T-cell (primary cell): ENCODE measurements at regions of chr16 and their contacts with region 1.

Region 1: DNA sequence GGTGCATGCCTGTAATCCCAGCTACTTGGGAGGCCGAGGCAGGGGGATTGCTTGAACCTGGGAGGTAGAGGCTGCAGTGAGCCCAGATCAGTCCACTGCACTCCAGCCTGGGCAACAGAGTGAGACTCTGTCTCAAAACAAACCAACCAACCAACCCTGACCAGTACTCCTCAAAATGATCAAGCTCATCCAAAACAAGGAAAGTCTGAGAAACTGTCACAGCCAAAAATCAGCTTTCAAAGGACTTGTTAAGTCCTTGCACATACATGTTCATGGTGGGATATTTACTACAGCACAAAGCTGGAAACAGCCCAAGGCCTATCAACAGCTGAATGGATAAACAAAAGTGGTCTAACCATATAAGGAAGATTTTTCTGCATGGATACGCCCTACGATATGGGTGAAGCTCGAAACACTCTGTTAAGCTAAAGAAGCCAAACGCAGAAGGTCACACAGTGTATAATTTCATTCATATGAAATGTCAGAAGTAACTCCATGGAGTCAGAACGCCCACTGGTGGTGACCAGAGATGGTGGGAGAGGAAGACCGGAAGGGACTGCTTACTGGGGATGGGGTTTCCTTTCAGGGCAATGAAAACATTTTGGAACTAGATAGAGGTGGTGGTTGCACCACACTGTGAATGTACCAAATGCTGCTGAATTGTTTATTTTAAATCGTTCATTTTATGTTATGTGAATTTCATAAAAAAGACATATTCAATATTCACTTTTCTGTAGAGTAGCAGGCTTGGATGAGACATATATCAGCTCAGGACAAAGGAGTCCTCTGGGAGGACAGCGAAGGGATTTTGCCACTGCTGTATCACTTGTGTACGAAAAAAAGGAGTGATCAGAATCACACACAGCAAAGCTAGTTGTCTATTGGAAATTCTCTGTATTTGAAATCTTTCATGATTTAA is 17.7 kb downstream of the CCL17 start:
- DNase-seq: no peak
- ATAC-seq: no peak
- H3K4me3 ChIP-seq: no peak overlapping the region
- H3K4me3 Mint-ChIP-seq: no peak overlapping the region
- H3K27ac ChIP-seq: no peak overlapping the region
- H3K27ac Mint-ChIP-seq: no peak overlapping the region
- H3K4me1 ChIP-seq: peaks cover 0 to 16% of the 10 kb centered on the region in 2 experiments
- H3K4me1 Mint-ChIP-seq: peaks cover 15 to 17% (median 16%) of the 10 kb centered on the region in 3 donors
- H3K27me3 ChIP-seq: peaks cover 0 to 2% of the 10 kb centered on the region in 2 experiments
- H3K27me3 Mint-ChIP-seq: no peaks in the 10 kb centered on the region

Region 2: DNA sequence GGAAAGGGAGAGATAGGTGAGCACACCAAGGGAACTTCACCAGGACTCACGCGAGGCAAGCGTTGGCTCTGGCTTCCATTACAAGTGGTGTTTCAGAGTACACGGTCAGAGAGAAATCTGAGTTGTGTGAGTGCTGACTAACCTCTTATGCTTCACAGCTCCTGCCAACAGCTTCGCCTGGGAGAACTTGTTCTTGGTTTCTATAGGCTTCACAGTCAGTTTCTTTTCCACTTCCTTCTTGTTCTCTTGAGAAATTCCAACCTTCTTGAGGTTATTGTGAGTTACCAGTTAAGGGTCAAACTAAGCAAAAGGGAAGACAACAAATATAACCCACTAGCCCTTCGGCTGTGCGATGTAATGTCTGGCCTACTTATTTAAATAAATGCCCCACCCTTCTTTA is 255.3 kb before region 1 on chr16:
- CTCF ChIA-PET with region 1: no interaction called
- POLR2A ChIA-PET with region 1: no interaction called
- DNase-seq: no peak
- ATAC-seq: no peak
- H3K4me3 ChIP-seq: no peak overlapping the region
- H3K4me3 Mint-ChIP-seq: no peak overlapping the region
- H3K27ac ChIP-seq: no peak overlapping the region
- H3K27ac Mint-ChIP-seq: peak overlapping the region in 1 of 2 donors; percentile 4
- H3K4me1 ChIP-seq: no peaks in the 10 kb centered on the region
- H3K4me1 Mint-ChIP-seq: peaks cover 12 to 13% (median 12%) of the 10 kb centered on the region in 3 donors
- H3K27me3 ChIP-seq: no peaks in the 10 kb centered on the region
- H3K27me3 Mint-ChIP-seq: no peaks in the 10 kb centered on the region

Region 3: DNA sequence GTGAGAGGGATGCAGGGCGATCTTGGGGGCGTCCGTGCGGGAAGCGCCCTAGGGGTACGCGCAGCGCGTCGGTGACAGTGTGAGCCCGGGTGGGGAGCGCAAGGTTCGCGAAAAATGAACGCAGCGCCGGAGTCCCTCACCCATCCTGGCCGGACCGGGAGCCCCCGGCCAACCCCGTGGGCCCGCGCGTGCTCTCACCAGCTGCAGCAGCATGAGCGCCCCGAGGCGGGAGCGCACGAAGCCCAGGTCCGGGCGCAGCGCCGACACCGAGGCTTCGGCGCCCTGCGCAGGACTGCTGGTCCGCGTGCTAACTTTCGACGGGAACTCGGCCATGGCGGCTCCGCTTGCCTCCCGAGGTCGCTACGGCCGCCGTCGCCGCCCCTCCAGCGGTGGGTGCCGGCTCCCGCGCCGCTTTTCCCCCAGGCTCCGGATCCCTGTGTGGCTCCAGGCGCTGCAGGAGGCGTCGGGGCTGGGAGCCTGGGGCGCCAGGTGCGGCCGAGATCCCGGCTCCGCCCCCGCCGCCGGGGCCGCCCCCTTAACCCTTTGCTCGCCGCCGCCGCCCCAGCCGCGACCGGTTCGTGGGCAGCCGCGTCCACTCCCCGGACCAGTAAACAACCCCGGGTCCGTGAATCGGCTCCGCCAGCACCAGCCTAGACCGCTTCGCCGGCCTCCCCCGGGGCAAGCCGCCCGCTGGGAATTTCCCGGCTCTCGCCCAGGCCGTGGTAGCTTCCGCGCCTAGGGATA is 137.9 kb before region 1 on chr16 and contains the start of gene PLLP:
- CTCF ChIA-PET with region 1: no interaction called
- POLR2A ChIA-PET with region 1: no interaction called
- DNase-seq: peak in 15 of 35 experiments; percentile 21 to 60 (median 39)
- ATAC-seq: peak; percentile 71 to 78 (median 75)
- H3K4me3 ChIP-seq: peak within 1 kb of the TSS; percentile 54 to 67
- H3K4me3 Mint-ChIP-seq: peak within 1 kb of the TSS; percentile 71 to 89 (median 77)
- H3K27ac ChIP-seq: no peak within 1 kb of the TSS
- H3K27ac Mint-ChIP-seq: no peak within 1 kb of the TSS
- H3K4me1 ChIP-seq: peaks cover 5 to 22% of the 10 kb centered on the region in 2 experiments
- H3K4me1 Mint-ChIP-seq: peaks cover 29 to 42% (median 40%) of the 10 kb centered on the region in 3 donors
- H3K27me3 ChIP-seq: peaks cover 0 to 38% of the 10 kb centered on the region in 2 experiments
- H3K27me3 Mint-ChIP-seq: peaks cover 0 to 14% of the 10 kb centered on the region in 2 donors
- total RNA-seq, gene PLLP: 1.4 to 4.3 (median 3.3) TPM

Region 4: DNA sequence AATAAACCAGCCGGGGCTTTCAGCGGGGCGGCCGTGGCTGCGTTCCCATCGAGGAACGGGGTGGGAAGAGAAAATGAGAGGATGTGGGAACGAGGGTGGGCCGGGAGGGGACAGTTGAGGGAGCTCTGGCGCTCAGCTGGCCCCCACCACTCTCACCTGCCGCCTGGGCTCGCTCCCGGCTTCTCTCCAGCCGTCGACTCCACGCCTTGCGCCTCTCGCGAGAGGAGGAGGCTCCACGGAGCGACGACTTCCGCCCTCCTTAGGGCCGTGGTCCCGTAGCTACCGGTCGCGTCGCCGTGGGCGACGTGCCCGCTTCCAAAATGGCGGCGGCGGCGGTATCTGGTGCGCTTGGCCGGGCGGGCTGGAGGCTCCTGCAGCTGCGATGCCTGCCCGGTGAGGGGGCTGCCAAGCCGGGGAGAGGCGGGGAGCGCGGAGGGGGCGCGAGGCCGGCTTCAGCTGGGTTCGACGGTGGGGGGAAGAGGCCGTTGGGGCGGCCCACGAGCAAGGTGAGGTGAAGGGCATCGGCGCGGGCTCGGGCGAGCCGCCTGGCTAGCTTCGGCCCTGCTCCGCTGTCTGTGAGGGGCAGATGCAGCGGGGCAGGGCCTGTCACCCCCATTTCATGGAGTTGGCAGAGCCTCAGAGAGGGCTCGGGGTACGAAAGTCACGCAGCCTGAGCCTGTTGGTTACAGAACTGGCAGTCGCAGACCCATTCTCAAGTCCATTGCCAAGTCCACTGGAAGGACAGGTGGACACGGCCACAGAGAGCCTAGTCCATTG is 25.1 kb after region 1 on chr16 and contains the starts of genes CIAPIN1 and COQ9:
- CTCF ChIA-PET with region 1: interaction called in 1 of 2 experiments, 3 read pairs
- POLR2A ChIA-PET with region 1: interaction called in 1 of 2 experiments, 17 read pairs
- DNase-seq: peak; percentile 83 to 95 (median 92)
- ATAC-seq: peak; percentile 99
- H3K4me3 ChIP-seq: peak within 1 kb of the TSS; percentile 66 to 95
- H3K4me3 Mint-ChIP-seq: peak within 1 kb of the TSS; percentile 87 to 90 (median 89)
- H3K27ac ChIP-seq: peak within 1 kb of the TSS; percentile 59
- H3K27ac Mint-ChIP-seq: peak within 1 kb of the TSS; percentile 78 to 88
- H3K4me1 ChIP-seq: peaks cover 4 to 26% of the 10 kb centered on the region in 2 experiments
- H3K4me1 Mint-ChIP-seq: peaks cover 33 to 46% (median 45%) of the 10 kb centered on the region in 3 donors
- H3K27me3 ChIP-seq: no peaks in the 10 kb centered on the region
- H3K27me3 Mint-ChIP-seq: no peaks in the 10 kb centered on the region
- total RNA-seq, gene CIAPIN1: 26.5 to 46.8 (median 28.5) TPM
- total RNA-seq, gene COQ9: 18.0 to 35.3 (median 34.2) TPM

Region 5: GRCh38 chr16:57485916-57486857 is 63.9 kb after region 1 on chr16 and contains the start of gene DOK4:
- CTCF ChIA-PET with region 1: no interaction called
- POLR2A ChIA-PET with region 1: no interaction called
- DNase-seq: peak; percentile 48 to 85 (median 70)
- ATAC-seq: peak; percentile 96 to 98 (median 98)
- H3K4me3 ChIP-seq: peak within 1 kb of the TSS; percentile 72 to 77
- H3K4me3 Mint-ChIP-seq: peak within 1 kb of the TSS; percentile 80 to 94 (median 83)
- H3K27ac ChIP-seq: no peak within 1 kb of the TSS
- H3K27ac Mint-ChIP-seq: peak within 1 kb of the TSS in 1 of 2 donors; percentile 69
- H3K4me1 ChIP-seq: peaks cover 0 to 25% of the 10 kb centered on the region in 2 experiments
- H3K4me1 Mint-ChIP-seq: peaks cover 17 to 26% (median 25%) of the 10 kb centered on the region in 3 donors
- H3K27me3 ChIP-seq: peaks cover 0 to 3% of the 10 kb centered on the region in 2 experiments
- H3K27me3 Mint-ChIP-seq: no peaks in the 10 kb centered on the region
- total RNA-seq, gene DOK4: 2.2 to 4.1 (median 3.1) TPM

Region 6: GRCh38 chr16:57720142-57720575 is 297.9 kb after region 1 on chr16:
- CTCF ChIA-PET with region 1: no interaction called
- POLR2A ChIA-PET with region 1: no interaction called
- DNase-seq: peak in 28 of 35 experiments; percentile 16 to 62 (median 36)
- ATAC-seq: peak in 3 of 4 experiments; percentile 38 to 65 (median 63)
- H3K4me3 ChIP-seq: no peak overlapping the region
- H3K4me3 Mint-ChIP-seq: no peak overlapping the region
- H3K27ac ChIP-seq: no peak overlapping the region
- H3K27ac Mint-ChIP-seq: no peak overlapping the region
- H3K4me1 ChIP-seq: no peaks in the 10 kb centered on the region
- H3K4me1 Mint-ChIP-seq: no peaks in the 10 kb centered on the region
- H3K27me3 ChIP-seq: peaks cover 0 to 28% of the 10 kb centered on the region in 2 experiments
- H3K27me3 Mint-ChIP-seq: peaks cover 0 to 4% of the 10 kb centered on the region in 2 donors